Gastrocnemius medialis (tissue), 4 donors: ENCODE measurements at regions of chr3 and their contacts with region 1.

Region 1: GRCh38 chr3:66115858-66116654 is 77.3 kb upstream of the MAGI1 start:
- DNase-seq: peak; percentile 54 to 76
- ATAC-seq: peak; percentile 99 to 100
- H3K4me3 ChIP-seq: no peak overlapping the region
- H3K27ac ChIP-seq: peak overlapping the region; percentile 58 to 72 (median 64)
- H3K4me1 ChIP-seq: peaks cover 12% of the 10 kb centered on the region in 2 donors
- H3K27me3 ChIP-seq: no peaks in the 10 kb centered on the region
- CTCF ChIP-seq: no peak
- POLR2A ChIP-seq: no peak

Region 2: GRCh38 chr3:65953301-65953812 is 162.7 kb before region 1 on chr3:
- in situ Hi-C with region 1: no loop called
- intact Hi-C with region 1: loop called (anchors 10 kb)
- DNase-seq: no peak
- ATAC-seq: peak in 1 of 2 donors; percentile 37
- H3K4me3 ChIP-seq: peak overlapping the region in 2 of 4 donors; percentile 53 to 56
- H3K27ac ChIP-seq: peak overlapping the region; percentile 42 to 75 (median 64)
- H3K4me1 ChIP-seq: peaks cover 30 to 37% of the 10 kb centered on the region in 2 donors
- H3K27me3 ChIP-seq: no peaks in the 10 kb centered on the region
- CTCF ChIP-seq: no peak
- POLR2A ChIP-seq: no peak

Region 3: GRCh38 chr3:66038726-66039589 is 77.1 kb before region 1 on chr3 and contains the start of gene MAGI1:
- in situ Hi-C with region 1: no loop called
- intact Hi-C with region 1: loop called (anchors 5 kb)
- DNase-seq: peak; percentile 78 to 89
- ATAC-seq: peak; percentile 87 to 92
- H3K4me3 ChIP-seq: peak within 1 kb of the TSS; percentile 91 to 99 (median 96)
- H3K27ac ChIP-seq: peak within 1 kb of the TSS; percentile 93 to 97 (median 95)
- H3K4me1 ChIP-seq: peaks cover 18 to 21% of the 10 kb centered on the region in 2 donors
- H3K27me3 ChIP-seq: no peaks in the 10 kb centered on the region
- CTCF ChIP-seq: no peak
- POLR2A ChIP-seq: peak; percentile 64 to 83
- total RNA-seq, gene MAGI1: 2.6 to 7.5 (median 3.9) TPM

Region 4: DNA sequence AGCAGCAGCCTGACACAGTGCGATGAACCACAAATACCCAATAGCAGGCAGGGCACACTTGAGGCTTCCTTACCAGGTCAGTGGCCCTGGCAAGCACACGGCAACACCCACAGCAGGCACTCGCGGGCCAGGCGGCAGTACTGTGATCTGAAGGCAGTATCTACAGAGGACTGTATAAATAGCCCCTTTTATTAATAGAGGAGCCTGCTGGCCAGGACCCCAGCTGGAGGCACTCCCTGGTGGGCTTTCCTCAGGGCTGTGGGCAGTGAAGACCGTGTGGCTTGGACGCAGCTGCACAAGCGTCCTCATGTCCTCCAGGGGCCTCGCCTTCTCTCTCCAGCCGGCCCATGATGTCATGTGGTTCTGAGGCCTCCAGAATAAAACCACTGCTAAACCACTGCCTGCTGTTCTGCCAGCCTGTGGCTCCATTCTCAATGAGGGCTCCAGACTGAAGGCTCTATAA is 340.7 kb after region 1 on chr3:
- in situ Hi-C with region 1: no loop called
- intact Hi-C with region 1: no loop called
- DNase-seq: peak; percentile 53 to 56
- ATAC-seq: peak; percentile 47 to 63
- H3K4me3 ChIP-seq: peak overlapping the region in 2 of 4 donors; percentile 7 to 18
- H3K27ac ChIP-seq: peak overlapping the region; percentile 84 to 93 (median 92)
- H3K4me1 ChIP-seq: peaks cover 59% of the 10 kb centered on the region in 2 donors
- H3K27me3 ChIP-seq: no peaks in the 10 kb centered on the region
- CTCF ChIP-seq: no peak
- POLR2A ChIP-seq: peak in 1 of 2 donors; percentile 29